PC-9 (cell line): ENCODE measurements at regions of chr20 and their contacts with region 1.

Region 1: GRCh38 chr20:5918856-5919625 is 31.3 kb downstream of the TRMT6 start:
- DNase-seq: peak in 1 of 2 experiments; percentile 50
- H3K4me3 ChIP-seq: no peak overlapping the region
- H3K27ac ChIP-seq: no peak overlapping the region
- H3K4me1 ChIP-seq: peaks cover 12% of the 10 kb centered on the region; the same call in 1 of the 2 replicates
- H3K27me3 ChIP-seq: peaks cover 25% of the 10 kb centered on the region
- CTCF ChIP-seq: no peak

Region 2: GRCh38 chr20:5627463-5628050 is 291.5 kb before region 1 on chr20:
- CTCF ChIA-PET with region 1: interaction called, 12 read pairs
- POLR2A ChIA-PET with region 1: no interaction called
- intact Hi-C with region 1: no loop called
- DNase-seq: no peak
- H3K4me3 ChIP-seq: no peak overlapping the region
- H3K27ac ChIP-seq: no peak overlapping the region
- H3K4me1 ChIP-seq: peaks cover 13% of the 10 kb centered on the region
- H3K27me3 ChIP-seq: no peaks in the 10 kb centered on the region
- CTCF ChIP-seq: no peak